ENCODE measurements at regions of chr6 and their contacts with region 1.

Region 1: DNA sequence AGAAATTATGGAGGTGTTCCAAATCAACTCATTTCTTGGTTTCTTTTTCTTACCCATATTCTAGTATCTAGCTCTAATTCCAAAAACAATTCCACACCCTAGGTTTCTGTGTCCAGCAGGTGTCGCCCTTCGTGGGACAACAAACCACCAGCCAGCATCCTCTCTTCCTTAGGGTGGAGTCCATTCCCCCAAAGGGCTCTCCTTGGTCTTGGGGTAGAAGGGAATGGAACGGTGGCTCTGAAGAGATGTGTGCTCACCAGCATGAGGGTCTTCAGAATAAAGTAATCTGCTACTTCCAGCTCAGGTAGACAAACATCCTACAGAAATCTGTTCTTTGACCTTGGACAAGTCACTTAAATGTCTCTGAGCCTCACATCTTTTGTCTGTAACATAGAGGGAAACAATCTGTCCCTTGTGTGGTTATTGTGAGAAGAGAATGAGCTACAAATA is 7.2 kb downstream of the HLA-DMB start:
- DNase-seq: peak; percentile 73
- ATAC-seq: peak; percentile 91
- H3K4me3 ChIP-seq: no peak overlapping the region
- H3K27ac ChIP-seq: no peak overlapping the region
- H3K4me1 ChIP-seq: no peaks in the 10 kb centered on the region
- H3K27me3 ChIP-seq: peaks cover 17% of the 10 kb centered on the region
- CTCF ChIP-seq: peak; percentile 85
- POLR2A ChIP-seq: no peak
- RAD21 ChIP-seq: peak; percentile 80

Region 2: DNA sequence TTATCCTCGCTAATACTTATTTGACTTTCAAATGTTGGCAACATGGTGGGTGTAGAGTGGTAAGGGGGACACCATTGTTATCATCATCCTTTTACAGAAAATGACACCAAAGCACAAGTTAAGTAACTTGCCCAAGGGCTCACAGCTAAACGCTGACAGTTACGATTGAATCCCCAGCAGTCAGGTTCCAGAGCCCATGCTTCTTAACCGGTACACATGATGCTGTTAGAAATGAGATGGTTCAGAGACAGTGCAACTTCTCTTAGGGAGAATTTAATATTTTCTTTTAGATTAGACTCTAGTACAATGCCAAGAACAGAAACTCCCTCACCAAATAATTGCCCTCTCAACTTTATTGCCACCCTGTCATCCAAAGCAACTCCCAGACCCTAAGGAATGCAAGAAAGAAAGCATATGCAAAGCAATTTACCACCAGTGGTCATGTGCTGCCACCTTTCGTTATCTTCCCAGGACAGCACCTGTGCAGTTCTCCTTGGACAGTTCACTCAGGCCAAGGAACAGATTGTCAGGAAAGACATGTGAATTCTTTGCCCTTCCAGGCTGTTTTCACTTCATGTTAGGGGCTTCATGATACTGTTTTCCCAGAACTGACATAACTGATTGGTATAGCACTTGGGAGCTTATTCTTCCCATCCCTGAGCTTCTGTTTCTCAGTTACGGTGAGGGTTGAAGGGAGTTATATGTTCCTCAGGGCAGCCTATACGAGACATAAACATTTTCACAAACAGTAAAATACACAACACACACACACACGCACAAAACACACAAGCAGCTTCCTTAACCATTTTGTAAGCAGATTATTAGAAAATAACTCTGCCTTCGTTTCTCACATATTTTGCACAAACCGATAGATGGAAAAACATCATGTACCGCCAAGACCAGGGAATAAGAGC is 14.1 kb after region 1 on chr6:
- CTCF ChIA-PET with region 1: interaction called, 22 read pairs
- POLR2A ChIA-PET with region 1: no interaction called
- dilution Hi-C with region 1: no loop called
- in situ Hi-C with region 1: no loop called
- intact Hi-C with region 1: loop called (anchors 1 kb)
- DNase-seq: peak; percentile 64
- ATAC-seq: peak; percentile 52
- H3K4me3 ChIP-seq: no peak overlapping the region
- H3K27ac ChIP-seq: no peak overlapping the region
- H3K4me1 ChIP-seq: peaks cover 11% of the 10 kb centered on the region
- H3K27me3 ChIP-seq: no peaks in the 10 kb centered on the region
- CTCF ChIP-seq: peak; percentile 63
- POLR2A ChIP-seq: no peak
- RAD21 ChIP-seq: peak; percentile 80

Region 3: DNA sequence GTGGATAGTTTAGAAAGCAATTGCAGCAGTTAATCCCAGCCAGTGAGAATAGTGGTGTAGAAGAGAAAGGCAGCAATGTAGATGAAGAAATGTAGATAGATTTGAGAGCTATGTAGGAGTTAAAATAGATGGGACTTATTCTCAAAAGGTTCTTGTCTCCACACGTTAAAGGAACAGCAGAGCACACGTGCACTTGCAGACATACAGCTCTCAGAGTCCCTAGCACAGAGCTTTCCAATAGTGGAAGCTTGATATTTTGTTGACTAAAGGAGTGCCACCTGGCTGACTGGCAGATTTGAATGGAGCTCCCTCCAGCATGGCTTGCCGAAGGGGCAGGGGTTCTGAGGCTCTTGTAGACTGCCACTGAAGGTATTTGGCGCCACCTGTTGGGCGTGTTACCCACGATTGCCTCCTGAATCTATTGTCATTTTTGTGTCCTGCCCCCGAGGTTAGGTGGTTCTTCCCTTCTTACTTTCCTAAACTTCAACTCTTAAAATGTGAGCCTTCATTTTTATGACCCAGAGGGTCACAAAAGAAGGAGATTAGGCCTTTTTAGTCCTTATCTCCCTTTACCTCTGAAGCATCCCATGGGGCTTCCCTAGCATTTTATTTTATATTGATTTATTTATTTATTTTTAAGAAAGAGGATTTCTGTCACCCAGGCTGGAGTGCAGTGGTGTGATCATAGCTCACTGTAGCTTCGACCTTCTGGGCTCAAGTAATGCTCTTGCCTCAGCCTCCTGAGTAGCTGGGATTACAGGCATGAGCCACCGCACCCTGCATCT is 51.1 kb after region 1 on chr6:
- CTCF ChIA-PET with region 1: interaction called, 29 read pairs
- POLR2A ChIA-PET with region 1: interaction called, 5 read pairs
- dilution Hi-C with region 1: no loop called
- in situ Hi-C with region 1: loop called (anchors 5 kb)
- intact Hi-C with region 1: loop called (anchors 1 kb)
- DNase-seq: peak; percentile 79
- ATAC-seq: peak; percentile 75
- H3K4me3 ChIP-seq: no peak overlapping the region
- H3K27ac ChIP-seq: no peak overlapping the region
- H3K4me1 ChIP-seq: no peaks in the 10 kb centered on the region
- H3K27me3 ChIP-seq: peaks cover 11% of the 10 kb centered on the region
- CTCF ChIP-seq: peak; percentile 93
- POLR2A ChIP-seq: no peak
- RAD21 ChIP-seq: peak; percentile 97

Measured in IMR-90 (cell line).